H1 (cell line): ENCODE measurements at regions of chr11 and their contacts with region 1.

Region 1: DNA sequence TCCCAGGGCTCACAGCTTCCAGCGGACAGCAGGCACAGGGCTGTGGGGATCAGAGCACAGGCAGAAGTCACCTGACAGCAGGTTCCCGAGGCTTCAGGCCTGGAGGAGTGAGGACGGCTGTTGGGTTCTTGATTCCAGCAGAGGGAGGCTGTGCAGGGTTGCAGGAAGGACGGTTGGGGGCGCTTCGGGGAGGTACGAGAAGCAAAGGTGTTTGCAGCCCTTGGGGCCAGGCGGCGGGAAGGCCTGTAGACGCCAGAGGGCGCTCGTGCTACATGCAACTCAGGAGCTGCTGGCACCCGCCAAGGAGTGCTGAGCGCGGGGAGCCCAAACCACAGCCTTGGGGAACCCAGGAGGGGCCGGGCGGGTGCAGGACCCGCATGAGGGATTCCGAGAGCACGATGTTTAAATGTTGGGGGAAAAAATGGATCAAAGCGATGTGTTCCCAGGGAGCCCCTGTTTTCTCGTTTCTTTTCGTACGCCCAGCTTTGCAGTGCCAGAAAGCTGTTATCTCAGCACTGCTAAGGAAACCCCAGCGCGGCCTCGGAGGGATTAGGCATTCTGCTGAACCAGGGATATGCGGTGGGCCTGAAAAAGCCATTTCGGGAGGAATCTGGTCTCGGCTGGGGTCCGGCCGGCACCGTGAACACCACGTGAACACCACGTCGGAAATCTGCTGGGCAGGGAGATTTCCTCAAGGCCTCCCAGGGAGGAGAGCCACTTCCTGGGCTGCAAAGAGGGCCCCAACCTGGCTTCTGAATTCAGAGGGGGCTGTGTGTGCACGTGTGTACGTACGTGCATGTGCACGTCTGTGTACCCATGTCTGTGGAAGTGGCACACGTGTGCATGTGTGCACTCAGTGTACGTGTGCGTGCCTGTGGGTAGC is 88.1 kb downstream of the KCNQ1 start:
- DNase-seq: peak; percentile 96 to 99
- H3K4me3 ChIP-seq: no peak overlapping the region
- H3K27ac ChIP-seq: peak overlapping the region; percentile 4; the same call in 1 of the 2 replicates
- H3K4me1 ChIP-seq: peaks cover 4 to 16% (median 10%) of the 10 kb centered on the region in 4 experiments
- H3K27me3 ChIP-seq: peaks cover 1 to 40% (median 14%) of the 10 kb centered on the region in 4 experiments; a peak in 6 of 7 replicates
- CTCF ChIP-seq: peak in 2 of 3 experiments; percentile 99 to 100; a peak in 3 of 4 replicates
- EP300 ChIP-seq: peak in 1 of 2 experiments; percentile 81; a peak in 1 of 3 replicates
- POLR2A ChIP-seq: no peak
- RAD21 ChIP-seq: peak; percentile 99 to 100

Region 2: DNA sequence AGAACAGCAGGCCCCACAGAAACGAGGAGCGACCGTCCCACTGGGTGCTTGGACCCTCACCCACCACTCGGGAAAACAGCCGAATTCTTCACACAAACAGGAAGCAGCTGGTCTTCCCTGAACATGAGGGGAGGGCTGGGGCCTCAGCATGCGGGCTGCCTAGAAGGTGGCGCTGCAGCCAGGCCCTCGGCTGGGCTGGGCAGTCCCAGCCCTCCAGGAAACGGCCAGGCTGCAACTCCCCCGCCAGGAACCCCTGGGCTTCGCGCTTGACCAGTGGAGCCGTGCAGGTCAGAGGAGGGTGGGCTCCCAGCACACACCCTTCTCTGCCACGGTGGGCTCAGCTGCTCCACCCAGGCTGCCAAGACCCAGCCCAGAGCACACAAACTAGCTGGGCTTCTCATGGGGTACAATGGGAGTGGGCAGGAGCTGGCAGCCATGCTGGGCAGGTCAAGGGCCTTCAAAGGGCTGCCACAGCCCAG is 423.4 kb before region 1 on chr11:
- CTCF ChIA-PET with region 1: no interaction called
- POLR2A ChIA-PET with region 1: no interaction called
- DNase-seq: no peak
- H3K4me3 ChIP-seq: no peak overlapping the region
- H3K27ac ChIP-seq: no peak overlapping the region
- H3K4me1 ChIP-seq: peaks cover 0 to 7% (median 1%) of the 10 kb centered on the region in 4 experiments; a peak in 3 of 7 replicates
- H3K27me3 ChIP-seq: no peaks in the 10 kb centered on the region
- CTCF ChIP-seq: no peak
- EP300 ChIP-seq: no peak
- POLR2A ChIP-seq: no peak
- RAD21 ChIP-seq: no peak

Region 3: DNA sequence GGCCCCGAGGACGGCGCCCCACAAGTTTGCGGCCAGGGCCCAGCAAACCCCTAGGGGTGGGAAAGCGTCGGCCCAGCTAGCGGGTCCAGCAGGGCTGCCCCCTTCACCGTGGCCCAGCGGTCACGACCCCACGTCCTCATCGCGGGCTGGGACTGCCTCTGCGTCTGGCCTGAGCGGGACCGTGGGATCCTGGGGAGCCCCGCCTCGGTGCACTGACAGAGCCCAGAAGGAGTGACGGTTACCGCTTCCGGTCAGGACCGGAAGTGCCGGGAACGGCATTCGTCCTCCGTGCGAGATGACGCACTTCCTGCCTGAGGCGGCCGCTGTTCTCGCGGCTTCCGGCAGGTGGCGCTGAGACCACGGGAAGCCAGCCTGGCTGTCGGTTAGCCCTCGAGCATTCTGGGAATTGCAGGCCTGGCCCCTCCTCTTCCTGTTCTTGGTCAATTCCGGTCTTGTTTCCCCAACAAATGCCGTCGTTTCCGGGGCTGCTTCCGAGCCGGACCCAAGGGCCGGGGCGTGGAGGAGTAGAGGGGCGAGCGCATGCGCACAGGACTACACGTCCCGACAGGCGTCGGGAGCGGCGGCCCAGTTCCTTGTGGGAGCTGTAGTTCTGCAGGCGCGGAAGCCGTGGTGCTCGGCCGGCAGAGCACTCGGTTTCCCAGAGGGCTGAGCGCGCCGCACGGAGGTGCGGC is 132.7 kb before region 1 on chr11 and contains the start of gene TSSC4:
- CTCF ChIA-PET with region 1: interaction called, 12 read pairs
- POLR2A ChIA-PET with region 1: no interaction called
- DNase-seq: peak; percentile 100
- H3K4me3 ChIP-seq: peak within 1 kb of the TSS; percentile 86 to 98 (median 97)
- H3K27ac ChIP-seq: peak within 1 kb of the TSS; percentile 78
- H3K4me1 ChIP-seq: peaks cover 0 to 17% (median 6%) of the 10 kb centered on the region in 4 experiments; a peak in 5 of 7 replicates
- H3K27me3 ChIP-seq: no peaks in the 10 kb centered on the region
- CTCF ChIP-seq: peak in 2 of 3 experiments; percentile 92 to 100; a peak in 3 of 4 replicates
- EP300 ChIP-seq: no peak
- POLR2A ChIP-seq: peak in 1 of 2 experiments; percentile 61; a peak in 1 of 3 replicates
- RAD21 ChIP-seq: peak; percentile 74 to 76
- total RNA-seq, gene TSSC4: 39.3 and 44.3 TPM in 2 replicates

Region 4: GRCh38 chr11:2443881-2444820 is 88.8 kb before region 1 on chr11 and contains the start of gene TRPM5:
- CTCF ChIA-PET with region 1: interaction called, 33 read pairs
- POLR2A ChIA-PET with region 1: no interaction called
- DNase-seq: peak in 1 of 2 experiments; percentile 84
- H3K4me3 ChIP-seq: peak within 1 kb of the TSS; percentile 33 to 70 (median 54); a peak in 7 of 8 replicates
- H3K27ac ChIP-seq: no peak within 1 kb of the TSS
- H3K4me1 ChIP-seq: peaks cover 0 to 3% (median 3%) of the 10 kb centered on the region in 4 experiments; a peak in 2 of 7 replicates
- H3K27me3 ChIP-seq: peaks cover 27 to 71% (median 57%) of the 10 kb centered on the region in 4 experiments
- CTCF ChIP-seq: peak in 1 of 3 experiments; percentile 8; a peak in 1 of 4 replicates
- EP300 ChIP-seq: no peak
- POLR2A ChIP-seq: no peak
- RAD21 ChIP-seq: no peak
- total RNA-seq, gene TRPM5: 0.11 TPM in 1 of 2 replicates, not detected in the other

Region 5: GRCh38 chr11:2474061-2474901 is 58.7 kb before region 1 on chr11:
- CTCF ChIA-PET with region 1: interaction called, 15 read pairs
- POLR2A ChIA-PET with region 1: no interaction called
- DNase-seq: no peak
- H3K4me3 ChIP-seq: no peak overlapping the region
- H3K27ac ChIP-seq: no peak overlapping the region
- H3K4me1 ChIP-seq: no peaks in the 10 kb centered on the region
- H3K27me3 ChIP-seq: peaks cover 0 to 22% (median 14%) of the 10 kb centered on the region in 4 experiments; a peak in 6 of 7 replicates
- CTCF ChIP-seq: no peak
- EP300 ChIP-seq: no peak
- POLR2A ChIP-seq: no peak
- RAD21 ChIP-seq: no peak

Region 6: DNA sequence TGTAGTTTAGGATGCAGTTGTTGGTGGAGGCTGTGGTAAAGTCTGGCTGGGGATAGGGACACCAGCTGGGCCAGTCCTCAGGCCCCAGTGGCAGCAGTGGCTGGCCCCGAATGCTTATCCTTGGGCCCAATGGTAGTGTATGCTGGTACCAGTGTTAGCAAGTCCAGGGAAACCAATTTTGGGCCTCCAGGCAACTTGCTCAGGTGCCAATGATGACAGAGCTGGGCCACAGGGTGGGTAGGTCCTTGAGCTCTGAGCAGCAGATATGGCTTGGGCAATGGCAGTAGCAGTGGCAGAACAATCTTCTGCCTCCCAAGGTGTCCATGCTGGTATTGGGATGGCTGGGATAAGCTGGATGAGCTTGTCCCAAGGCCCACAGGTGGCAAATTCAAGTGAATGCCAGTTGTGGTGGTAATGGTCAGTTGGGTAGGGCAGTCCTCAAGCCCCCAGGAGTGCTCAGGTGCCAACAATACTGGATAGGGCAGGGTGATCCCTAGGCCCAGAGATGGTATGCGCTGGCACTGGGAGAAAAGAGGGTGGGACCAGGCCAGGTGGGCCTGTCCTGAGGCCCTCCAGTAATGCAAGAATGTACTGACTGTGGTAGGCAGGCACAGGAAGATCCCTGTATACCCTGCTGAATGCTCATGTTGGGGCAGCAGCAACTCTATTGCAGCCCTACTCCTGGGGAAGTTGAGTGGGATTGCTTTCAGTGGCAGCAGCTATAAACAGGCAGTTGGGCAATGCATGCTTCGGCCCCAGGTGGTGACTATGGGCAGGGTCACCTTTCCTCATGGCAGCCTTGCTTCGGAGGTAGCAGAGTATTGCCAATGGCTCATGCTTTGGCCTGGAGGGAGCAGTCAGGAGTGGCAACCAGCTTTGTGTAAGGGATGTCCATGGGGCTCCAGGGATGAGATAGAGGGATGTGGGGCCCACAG is 112.2 kb after region 1 on chr11:
- CTCF ChIA-PET with region 1: no interaction called
- POLR2A ChIA-PET with region 1: no interaction called
- DNase-seq: no peak
- H3K4me3 ChIP-seq: no peak overlapping the region; a peak in 1 of 8 replicates
- H3K27ac ChIP-seq: no peak overlapping the region
- H3K4me1 ChIP-seq: no peaks in the 10 kb centered on the region
- H3K27me3 ChIP-seq: peaks cover 0 to 30% (median 12%) of the 10 kb centered on the region in 4 experiments; a peak in 6 of 7 replicates
- CTCF ChIP-seq: no peak
- EP300 ChIP-seq: no peak
- POLR2A ChIP-seq: no peak
- RAD21 ChIP-seq: no peak

Region 7: GRCh38 chr11:2700415-2701211 is 167.7 kb after region 1 on chr11:
- CTCF ChIA-PET with region 1: interaction called, 15 read pairs
- POLR2A ChIA-PET with region 1: interaction called, 3 read pairs
- DNase-seq: no peak
- H3K4me3 ChIP-seq: peak overlapping the region; percentile 1 to 70 (median 20); a peak in 6 of 8 replicates
- H3K27ac ChIP-seq: no peak overlapping the region
- H3K4me1 ChIP-seq: peaks cover 0 to 24% (median 14%) of the 10 kb centered on the region in 4 experiments; a peak in 6 of 7 replicates
- H3K27me3 ChIP-seq: peaks cover 5 to 42% (median 26%) of the 10 kb centered on the region in 4 experiments
- CTCF ChIP-seq: no peak
- EP300 ChIP-seq: no peak
- POLR2A ChIP-seq: no peak
- RAD21 ChIP-seq: 0 out of 4 replicates have a peak, but pooled peaks of 1 of the 2 experiments have one; percentile 2

Region 8: DNA sequence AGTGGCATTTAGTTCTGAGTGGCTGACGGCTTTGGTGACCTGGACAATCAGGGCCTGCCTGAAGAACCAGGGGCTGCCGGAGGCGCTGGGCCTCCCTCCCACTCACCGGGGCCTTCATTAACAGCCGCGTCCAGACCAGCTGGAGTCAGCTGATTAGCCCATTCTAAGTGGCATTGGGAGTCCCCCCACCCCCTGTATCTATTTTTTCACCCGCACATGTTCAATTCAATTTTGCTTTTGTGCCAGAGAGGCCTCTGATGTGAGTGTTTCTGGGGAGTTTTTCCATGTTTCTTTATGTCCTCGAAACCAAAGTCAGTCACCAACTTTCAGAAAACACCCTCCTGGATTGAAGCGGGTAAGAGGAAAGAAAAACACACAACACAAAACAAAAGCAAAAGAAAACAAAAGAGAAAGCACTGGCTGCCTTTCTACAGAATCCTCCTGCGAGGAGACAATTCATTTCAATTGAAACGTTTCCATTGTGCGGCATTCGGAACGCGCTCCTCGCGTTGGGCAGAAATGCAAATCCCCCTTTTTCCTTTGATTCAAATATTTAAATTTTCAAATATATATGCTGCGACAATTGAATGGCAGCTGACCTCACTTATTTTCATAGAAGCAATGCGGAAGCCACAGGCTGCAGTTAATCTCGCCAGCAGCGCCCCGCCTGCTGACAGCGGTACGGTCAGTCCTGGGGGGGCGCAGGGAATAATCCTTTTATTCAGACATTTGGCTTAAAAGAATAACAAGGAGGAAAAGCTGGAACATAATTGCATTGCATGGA is 335.0 kb after region 1 on chr11:
- CTCF ChIA-PET with region 1: interaction called, 10 read pairs
- POLR2A ChIA-PET with region 1: no interaction called
- DNase-seq: no peak
- H3K4me3 ChIP-seq: peak overlapping the region in 2 of 4 experiments; percentile 10 to 47; a peak in 4 of 8 replicates
- H3K27ac ChIP-seq: no peak overlapping the region
- H3K4me1 ChIP-seq: peaks cover 4 to 38% (median 22%) of the 10 kb centered on the region in 4 experiments
- H3K27me3 ChIP-seq: peaks cover 42 to 90% (median 79%) of the 10 kb centered on the region in 4 experiments
- CTCF ChIP-seq: no peak
- EP300 ChIP-seq: no peak
- POLR2A ChIP-seq: no peak
- RAD21 ChIP-seq: no peak

Region 9: DNA sequence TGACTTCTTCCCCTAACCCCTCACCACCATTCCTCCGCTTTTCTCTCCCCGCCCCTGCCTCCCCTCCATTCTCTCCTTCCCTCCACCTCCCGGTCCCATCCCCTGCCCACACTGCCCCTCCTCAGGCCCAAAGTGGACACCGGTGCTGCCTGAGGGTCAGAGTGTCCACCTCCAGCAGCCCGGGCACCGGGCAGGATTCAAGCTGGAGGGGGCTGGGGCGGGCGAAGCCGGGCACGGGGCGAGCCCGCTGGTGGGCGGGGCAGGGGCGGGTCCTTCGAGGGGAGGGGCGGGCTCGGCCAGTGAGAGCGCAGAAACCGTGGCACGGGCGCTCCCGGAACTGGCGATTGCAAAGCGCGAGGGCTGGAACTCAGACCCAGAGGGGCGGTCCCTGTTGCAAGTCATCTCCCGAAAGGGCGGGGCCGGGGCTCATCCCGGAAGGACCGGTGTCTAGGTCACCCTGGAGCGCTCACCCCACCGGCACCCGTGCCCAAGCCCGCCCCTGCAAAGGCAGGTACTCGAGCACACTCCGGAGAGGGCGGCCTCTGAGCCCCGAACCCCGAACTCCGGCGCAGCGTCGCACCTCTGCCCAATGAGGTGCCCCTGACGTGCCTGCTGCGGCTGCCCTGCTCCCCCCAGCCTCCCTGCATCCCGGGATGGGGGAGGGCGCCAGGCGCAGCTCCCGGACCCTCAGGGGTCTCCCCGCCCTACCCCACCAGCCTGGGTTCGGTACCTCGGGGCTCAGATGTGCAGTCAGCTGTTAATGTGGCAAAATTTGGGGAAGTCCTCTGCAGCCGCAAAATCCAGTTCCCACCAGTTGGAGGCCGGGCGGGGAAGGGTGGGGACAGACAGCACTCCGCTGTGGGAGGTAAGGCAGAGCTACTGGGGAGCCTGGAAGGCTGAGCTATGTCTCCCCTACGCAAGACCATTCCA is 369.2 kb after region 1 on chr11:
- CTCF ChIA-PET with region 1: interaction called, 24 read pairs
- POLR2A ChIA-PET with region 1: no interaction called
- DNase-seq: peak; percentile 73 to 92
- H3K4me3 ChIP-seq: peak overlapping the region; percentile 72 to 94 (median 76)
- H3K27ac ChIP-seq: peak overlapping the region; percentile 34; the same call in 1 of the 2 replicates
- H3K4me1 ChIP-seq: peaks cover 0 to 19% (median 14%) of the 10 kb centered on the region in 4 experiments; a peak in 5 of 7 replicates
- H3K27me3 ChIP-seq: peaks cover 0 to 25% (median 5%) of the 10 kb centered on the region in 4 experiments; a peak in 4 of 7 replicates
- CTCF ChIP-seq: no peak
- EP300 ChIP-seq: no peak
- POLR2A ChIP-seq: peak in 1 of 2 experiments; percentile 18; a peak in 1 of 3 replicates
- RAD21 ChIP-seq: no peak